ENCODE measurements at regions of chr2 and their contacts with region 1.

Region 1: DNA sequence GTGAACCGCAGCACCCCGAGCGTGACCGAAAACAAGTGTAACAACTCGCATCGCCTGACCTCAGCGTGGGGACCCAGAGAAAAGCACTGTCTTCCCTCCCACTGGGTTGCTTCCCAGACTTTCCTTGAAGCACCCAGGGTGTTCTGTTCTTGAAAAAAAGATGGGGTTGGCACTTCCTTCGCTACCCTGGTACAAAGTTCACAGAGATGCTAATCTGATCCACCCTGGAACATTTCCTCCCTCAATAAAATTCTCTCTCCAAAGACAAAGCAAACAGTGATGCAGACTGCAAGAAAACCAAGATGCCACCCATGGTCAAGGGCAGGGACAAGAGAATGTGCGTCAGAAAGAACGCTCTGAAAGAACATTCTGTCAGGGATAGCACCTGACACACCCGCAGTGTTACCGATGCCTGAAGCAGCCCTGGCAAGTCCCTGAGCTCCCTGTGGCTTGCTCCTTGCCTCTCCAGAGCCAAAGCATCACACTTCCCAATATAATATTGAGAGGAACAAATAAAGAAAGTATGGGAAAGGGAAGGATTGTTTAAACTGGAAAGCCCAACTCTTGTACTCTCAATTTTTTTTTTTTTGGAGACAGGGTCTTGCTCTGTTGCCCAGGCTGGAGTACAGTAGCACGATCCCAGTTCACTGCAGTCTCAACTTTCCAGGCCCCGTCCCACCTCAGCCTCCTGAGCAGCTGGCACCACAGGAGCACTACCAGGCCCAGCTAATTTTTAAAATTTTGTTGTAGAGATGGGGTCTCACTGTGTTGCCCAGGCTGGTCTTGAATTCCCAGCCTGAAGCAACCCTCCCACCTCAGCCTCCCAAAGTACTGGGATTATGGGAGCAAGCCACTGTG is 70.7 kb downstream of the TBC1D8 start:
- DNase-seq: no peak
- ATAC-seq: no peak
- H3K4me3 ChIP-seq: no peak overlapping the region
- H3K27ac ChIP-seq: peak overlapping the region; percentile 56
- H3K4me1 ChIP-seq: peaks cover 54% of the 10 kb centered on the region
- H3K27me3 ChIP-seq: no peaks in the 10 kb centered on the region
- CTCF ChIP-seq: no peak

Region 2: GRCh38 chr2:100703213-100703612 is 377.2 kb before region 1 on chr2:
- CTCF ChIA-PET with region 1: no interaction called
- POLR2A ChIA-PET with region 1: interaction called, 10 read pairs
- in situ Hi-C with region 1: no loop called
- intact Hi-C with region 1: no loop called
- DNase-seq: no peak
- ATAC-seq: no peak
- H3K4me3 ChIP-seq: no peak overlapping the region
- H3K27ac ChIP-seq: no peak overlapping the region
- H3K4me1 ChIP-seq: no peaks in the 10 kb centered on the region
- H3K27me3 ChIP-seq: no peaks in the 10 kb centered on the region
- CTCF ChIP-seq: no peak

Measured in Panc1 (cell line).